ENCODE measurements at regions of chr13 and their contacts with region 1.

Region 1: DNA sequence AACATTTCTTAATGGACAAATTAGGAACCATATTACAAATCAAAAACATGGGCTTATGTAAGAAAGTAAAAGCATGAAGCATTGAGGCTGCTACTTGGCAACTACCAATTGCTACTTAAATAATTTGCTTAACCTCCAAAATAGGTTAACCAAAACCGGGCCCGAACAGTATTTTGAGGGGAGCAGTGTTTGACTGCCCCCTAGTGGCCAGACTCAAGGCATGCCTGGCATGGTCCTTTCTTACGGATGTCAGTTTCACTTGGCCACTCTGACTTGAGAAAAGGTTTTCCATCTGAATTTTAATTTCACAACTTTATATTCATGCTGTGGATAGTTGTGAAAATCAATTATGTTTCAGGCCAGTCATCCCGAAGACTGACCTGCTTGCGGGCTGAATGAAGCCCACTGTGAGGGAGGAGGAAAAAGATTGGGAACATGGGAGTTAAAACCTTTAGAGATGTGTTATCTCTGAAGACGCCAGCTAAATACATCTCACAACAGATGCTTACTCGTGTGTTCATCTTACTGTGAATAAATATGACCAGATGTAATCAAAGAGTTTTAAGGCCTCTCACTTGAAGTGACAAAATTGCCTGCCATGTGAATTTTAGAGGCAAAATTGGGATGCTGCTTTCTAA is 2.9 kb downstream of the RXFP2 start:
- DNase-seq: peak in 4 of 5 donors; percentile 38 to 64 (median 60)
- ATAC-seq: peak in 3 of 4 donors; percentile 63 to 80 (median 79)
- H3K4me3 ChIP-seq: peak overlapping the region in 1 of 12 donors; percentile 20
- H3K27ac ChIP-seq: no peak overlapping the region
- H3K4me1 ChIP-seq: peaks cover 0 to 12% (median 0%) of the 10 kb centered on the region in 12 donors
- H3K27me3 ChIP-seq: peaks cover 0 to 13% (median 0%) of the 10 kb centered on the region in 9 donors
- CTCF ChIP-seq: peak in 11 of 12 donors; percentile 95 to 100 (median 99)
- POLR2A ChIP-seq: no peak

Region 2: GRCh38 chr13:31174018-31174417 is 568.2 kb before region 1 on chr13:
- intact Hi-C with region 1: loop called in 2 of 10 experiments (anchors 10 kb)
- DNase-seq: no peak
- ATAC-seq: no peak
- H3K4me3 ChIP-seq: no peak overlapping the region
- H3K27ac ChIP-seq: no peak overlapping the region
- H3K4me1 ChIP-seq: no peaks in the 10 kb centered on the region
- H3K27me3 ChIP-seq: no peaks in the 10 kb centered on the region
- CTCF ChIP-seq: peak in 6 of 12 donors; percentile 11 to 32 (median 24)
- POLR2A ChIP-seq: no peak

Region 3: DNA sequence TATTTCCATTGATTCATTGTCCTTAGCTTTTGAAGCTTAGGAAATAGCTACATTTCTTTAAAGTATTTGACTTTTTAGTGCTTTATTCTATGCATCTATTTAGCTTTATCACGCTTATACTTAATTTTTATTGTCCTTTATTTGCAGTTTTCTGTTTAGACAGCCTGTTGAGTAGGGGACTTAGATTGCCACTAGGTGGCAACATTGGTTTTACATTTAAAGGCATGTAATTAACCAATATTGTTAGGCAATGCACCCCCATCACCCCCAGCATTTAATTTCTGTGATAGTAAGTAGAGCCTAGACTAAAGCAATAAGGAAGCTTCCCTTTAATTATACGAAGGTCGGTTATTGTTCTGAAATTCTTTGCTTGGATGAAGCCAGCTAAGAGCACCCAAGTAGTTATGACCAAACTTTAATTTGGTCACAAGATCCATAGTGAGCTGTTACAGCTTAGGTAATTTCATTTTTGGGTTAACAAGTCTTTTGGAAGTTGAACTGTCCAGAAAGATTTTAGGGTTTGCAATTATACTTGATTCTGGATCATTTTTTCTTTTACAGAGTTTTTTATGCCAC is 505.9 kb before region 1 on chr13:
- intact Hi-C with region 1: loop called in 7 of 10 experiments (anchors 5 to 10 kb)
- DNase-seq: no peak
- ATAC-seq: peak in 1 of 4 donors; percentile 39
- H3K4me3 ChIP-seq: no peak overlapping the region
- H3K27ac ChIP-seq: no peak overlapping the region
- H3K4me1 ChIP-seq: no peaks in the 10 kb centered on the region
- H3K27me3 ChIP-seq: no peaks in the 10 kb centered on the region
- CTCF ChIP-seq: peak; percentile 50 to 79 (median 68)
- POLR2A ChIP-seq: no peak

Region 4: DNA sequence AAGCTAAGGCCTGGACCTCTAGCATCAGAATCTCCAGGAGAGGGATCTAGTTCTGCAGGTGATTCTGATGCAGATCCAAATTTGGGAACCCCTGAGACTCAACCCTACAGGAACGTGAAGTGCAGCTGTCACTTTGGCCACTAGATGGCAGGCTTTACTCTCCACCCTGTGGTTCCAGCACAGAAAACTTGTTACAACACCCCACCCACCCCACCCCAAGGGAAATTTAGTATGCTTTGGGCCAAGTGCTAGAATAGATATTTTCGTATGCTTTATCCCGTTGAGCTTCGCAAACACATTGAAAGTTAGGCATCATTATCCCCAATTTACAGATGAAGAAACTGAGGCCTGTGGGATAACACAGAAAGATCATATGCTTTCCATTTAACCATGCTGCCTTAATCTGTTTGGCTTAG is 310.5 kb before region 1 on chr13:
- intact Hi-C with region 1: loop called (anchors 1 to 5 kb)
- DNase-seq: peak in 4 of 5 donors; percentile 34 to 51 (median 40)
- ATAC-seq: peak in 3 of 4 donors; percentile 47 to 72 (median 62)
- H3K4me3 ChIP-seq: no peak overlapping the region
- H3K27ac ChIP-seq: no peak overlapping the region
- H3K4me1 ChIP-seq: no peaks in the 10 kb centered on the region
- H3K27me3 ChIP-seq: no peaks in the 10 kb centered on the region
- CTCF ChIP-seq: peak; percentile 79 to 90 (median 86)
- POLR2A ChIP-seq: no peak

Region 5: DNA sequence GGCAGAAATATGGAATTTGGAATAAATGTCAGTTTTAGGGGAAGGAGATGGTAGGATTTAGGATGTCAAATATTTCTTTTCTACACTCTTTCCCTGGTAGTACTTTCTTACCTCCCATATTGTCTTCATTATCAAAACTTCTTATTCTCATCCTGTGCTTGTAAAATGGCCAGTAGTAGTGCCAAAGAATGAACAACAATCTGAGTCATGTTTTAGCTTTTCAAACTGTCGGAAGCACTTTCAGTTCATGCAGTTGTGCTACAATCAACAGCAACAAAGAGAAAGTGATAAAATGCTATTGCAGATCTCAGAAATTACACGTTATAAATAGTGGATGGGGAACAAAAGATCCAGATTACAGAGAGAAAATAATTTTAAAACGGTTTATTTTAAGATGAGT is 196.6 kb before region 1 on chr13:
- intact Hi-C with region 1: loop called in 2 of 10 experiments (anchors 10 kb)
- DNase-seq: no peak
- ATAC-seq: no peak
- H3K4me3 ChIP-seq: peak overlapping the region in 1 of 12 donors; percentile 23
- H3K27ac ChIP-seq: no peak overlapping the region
- H3K4me1 ChIP-seq: peaks cover 0 to 8% (median 0%) of the 10 kb centered on the region in 12 donors
- H3K27me3 ChIP-seq: no peaks in the 10 kb centered on the region
- CTCF ChIP-seq: no peak
- POLR2A ChIP-seq: no peak

Measured in heart left ventricle (tissue), 16 donors.